HEK293 (cell line): ENCODE measurements at regions of chr19 and their contacts with region 1.

Region 1: DNA sequence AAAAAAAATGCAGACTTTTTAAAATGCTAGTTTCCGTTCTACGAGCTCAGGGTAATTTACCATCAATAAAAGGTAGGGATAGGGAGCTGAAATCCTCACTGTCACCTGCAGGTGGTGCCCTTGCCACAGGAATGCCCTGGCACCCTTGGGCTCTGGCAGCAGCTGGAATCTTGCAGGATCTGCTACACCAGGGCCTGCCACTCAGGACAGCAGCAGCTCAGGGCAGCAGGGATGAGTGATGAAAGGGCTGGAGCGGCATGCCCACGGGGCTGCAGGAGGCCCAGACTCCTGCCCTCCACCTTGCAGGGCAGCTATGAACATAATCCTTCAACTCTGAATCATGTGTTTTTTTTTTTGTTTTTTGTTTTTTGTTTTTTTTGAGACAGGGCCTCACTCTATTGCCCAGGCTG is 54.0 kb downstream of the GNG7 start:
- H3K4me3 ChIP-seq: no peak overlapping the region
- H3K27ac ChIP-seq: no peak overlapping the region
- H3K4me1 ChIP-seq: no peaks in the 10 kb centered on the region
- CTCF ChIP-seq: peak; percentile 79

Region 2: GRCh38 chr19:2438178-2438864 is 210.2 kb before region 1 on chr19:
- CTCF ChIA-PET with region 1: no interaction called
- POLR2A ChIA-PET with region 1: no interaction called
- H3K4me3 ChIP-seq: no peak overlapping the region
- H3K27ac ChIP-seq: no peak overlapping the region
- H3K4me1 ChIP-seq: no peaks in the 10 kb centered on the region
- CTCF ChIP-seq: no peak

Region 3: GRCh38 chr19:2561895-2562294 is 86.6 kb before region 1 on chr19:
- CTCF ChIA-PET with region 1: no interaction called
- POLR2A ChIA-PET with region 1: no interaction called
- H3K4me3 ChIP-seq: no peak overlapping the region
- H3K27ac ChIP-seq: no peak overlapping the region
- H3K4me1 ChIP-seq: no peaks in the 10 kb centered on the region
- CTCF ChIP-seq: no peak

Region 4: GRCh38 chr19:2636897-2637683 is 11.4 kb before region 1 on chr19:
- CTCF ChIA-PET with region 1: interaction called, 22 read pairs
- POLR2A ChIA-PET with region 1: no interaction called
- H3K4me3 ChIP-seq: no peak overlapping the region
- H3K27ac ChIP-seq: no peak overlapping the region
- H3K4me1 ChIP-seq: no peaks in the 10 kb centered on the region
- CTCF ChIP-seq: peak; percentile 95

Region 5: GRCh38 chr19:2750808-2751443 is 102.4 kb after region 1 on chr19:
- CTCF ChIA-PET with region 1: interaction called, 54 read pairs
- POLR2A ChIA-PET with region 1: no interaction called
- H3K4me3 ChIP-seq: no peak overlapping the region
- H3K27ac ChIP-seq: no peak overlapping the region
- H3K4me1 ChIP-seq: no peaks in the 10 kb centered on the region
- CTCF ChIP-seq: no peak

Region 6: GRCh38 chr19:2887391-2887914 is 238.9 kb after region 1 on chr19:
- CTCF ChIA-PET with region 1: interaction called, 11 read pairs
- POLR2A ChIA-PET with region 1: no interaction called
- H3K4me3 ChIP-seq: no peak overlapping the region
- H3K27ac ChIP-seq: no peak overlapping the region
- H3K4me1 ChIP-seq: no peaks in the 10 kb centered on the region
- CTCF ChIP-seq: peak; percentile 46; the same call in 1 of the 2 replicates